Right cardiac atrium (tissue), 5 donors: ENCODE measurements at regions of chr11 and their contacts with region 1.

Region 1: GRCh38 chr11:14537134-14537599 is 17.0 kb upstream of the PSMA1 start:
- DNase-seq: no peak
- ATAC-seq: no peak
- H3K4me3 ChIP-seq: no peak overlapping the region
- H3K27ac ChIP-seq: no peak overlapping the region
- H3K4me1 ChIP-seq: peaks cover 4% of the 10 kb centered on the region
- H3K27me3 ChIP-seq: no peaks in the 10 kb centered on the region

Region 2: DNA sequence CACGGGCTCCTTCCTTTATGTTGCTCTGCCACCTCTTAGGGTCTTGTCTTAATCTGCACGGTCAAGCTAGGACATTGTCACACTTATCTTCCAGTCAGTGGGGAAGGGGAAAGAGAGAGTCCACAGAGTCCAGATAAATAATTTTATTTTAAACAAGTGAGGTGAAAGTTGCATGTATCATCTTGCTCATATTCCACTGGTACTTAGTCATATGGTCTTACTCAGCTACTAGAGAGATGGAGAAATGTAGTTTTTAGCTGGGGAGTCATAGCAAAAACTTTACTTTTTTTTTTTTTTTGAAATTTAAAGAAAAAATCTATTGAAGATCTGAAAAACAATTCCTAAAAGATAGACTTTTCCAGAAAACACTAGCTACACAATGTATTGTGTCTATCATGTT is 135.5 kb after region 1 on chr11:
- intact Hi-C with region 1: no loop called
- DNase-seq: no peak
- ATAC-seq: no peak
- H3K4me3 ChIP-seq: no peak overlapping the region
- H3K27ac ChIP-seq: no peak overlapping the region
- H3K4me1 ChIP-seq: no peaks in the 10 kb centered on the region
- H3K27me3 ChIP-seq: no peaks in the 10 kb centered on the region

Region 3: DNA sequence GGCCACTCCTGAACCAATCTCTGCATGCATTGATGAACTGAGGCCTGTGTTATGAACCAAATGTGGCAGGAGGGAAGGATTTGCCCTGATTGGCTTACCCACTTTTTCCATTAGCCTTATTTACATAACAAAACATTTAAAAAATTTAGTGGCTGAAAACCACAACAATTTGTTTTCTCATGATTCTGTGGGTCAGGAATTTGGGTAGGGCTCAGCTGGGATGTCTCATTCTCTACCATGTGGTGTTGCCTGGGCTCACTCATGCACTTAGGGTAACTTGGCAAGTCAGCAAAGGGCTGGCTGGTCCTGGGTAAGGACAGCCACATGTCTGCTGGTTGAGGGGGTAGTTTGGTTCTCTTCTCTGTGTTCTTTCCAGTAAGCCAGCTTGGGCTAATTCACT is 390.0 kb after region 1 on chr11:
- intact Hi-C with region 1: no loop called
- DNase-seq: no peak
- ATAC-seq: no peak
- H3K4me3 ChIP-seq: no peak overlapping the region
- H3K27ac ChIP-seq: no peak overlapping the region
- H3K4me1 ChIP-seq: no peaks in the 10 kb centered on the region
- H3K27me3 ChIP-seq: no peaks in the 10 kb centered on the region

Region 4: GRCh38 chr11:15074206-15075161 is 537.3 kb after region 1 on chr11:
- intact Hi-C with region 1: loop called in 1 of 4 experiments (anchors 5 kb)
- DNase-seq: peak; percentile 82 to 95 (median 92)
- ATAC-seq: peak; percentile 90 to 93
- H3K4me3 ChIP-seq: peak overlapping the region; percentile 31
- H3K27ac ChIP-seq: no peak overlapping the region
- H3K4me1 ChIP-seq: no peaks in the 10 kb centered on the region
- H3K27me3 ChIP-seq: peaks cover 4% of the 10 kb centered on the region